Endothelial cell of umbilical vein (primary cell): ENCODE measurements at regions of chr1 and their contacts with region 1.

Region 1: GRCh38 chr1:209747580-209748262 is 8.1 kb upstream of the TRAF3IP3 start:
- DNase-seq: peak; percentile 93
- H3K4me3 ChIP-seq: no peak overlapping the region
- H3K27ac ChIP-seq: no peak overlapping the region
- H3K4me1 ChIP-seq: no peaks in the 10 kb centered on the region
- H3K27me3 ChIP-seq: peaks cover 0 to 5% of the 10 kb centered on the region in 2 experiments
- CTCF ChIP-seq: peak; percentile 80 to 97
- POLR2A ChIP-seq: no peak

Region 2: DNA sequence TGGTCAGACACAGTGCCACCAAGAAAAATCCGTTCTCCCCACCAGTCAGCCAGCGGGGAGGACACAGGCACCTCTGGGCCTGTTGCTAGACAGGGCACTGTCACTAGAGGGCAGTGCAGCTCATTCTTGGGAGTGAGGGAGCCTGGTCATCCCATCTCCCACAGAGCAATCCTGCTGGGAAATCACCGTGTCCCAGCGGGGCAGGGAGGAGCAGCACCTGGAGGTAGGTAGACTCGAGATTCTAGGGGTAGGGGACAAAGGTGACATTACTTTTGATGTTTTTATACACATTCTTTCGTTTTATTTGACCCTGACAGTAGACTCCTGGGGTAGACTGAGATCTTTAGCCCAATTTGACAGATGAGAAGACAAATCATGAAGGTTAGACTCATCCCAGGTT is 170.9 kb before region 1 on chr1:
- CTCF ChIA-PET with region 1: interaction called, 23 read pairs
- POLR2A ChIA-PET with region 1: no interaction called
- dilution Hi-C with region 1: no loop called
- intact Hi-C with region 1: loop called (anchors 1 kb)
- DNase-seq: peak; percentile 72
- H3K4me3 ChIP-seq: no peak overlapping the region
- H3K27ac ChIP-seq: no peak overlapping the region
- H3K4me1 ChIP-seq: peaks cover 8% of the 10 kb centered on the region
- H3K27me3 ChIP-seq: peaks cover 13 to 17% of the 10 kb centered on the region in 2 experiments
- CTCF ChIP-seq: peak; percentile 94 to 95
- POLR2A ChIP-seq: no peak

Region 3: DNA sequence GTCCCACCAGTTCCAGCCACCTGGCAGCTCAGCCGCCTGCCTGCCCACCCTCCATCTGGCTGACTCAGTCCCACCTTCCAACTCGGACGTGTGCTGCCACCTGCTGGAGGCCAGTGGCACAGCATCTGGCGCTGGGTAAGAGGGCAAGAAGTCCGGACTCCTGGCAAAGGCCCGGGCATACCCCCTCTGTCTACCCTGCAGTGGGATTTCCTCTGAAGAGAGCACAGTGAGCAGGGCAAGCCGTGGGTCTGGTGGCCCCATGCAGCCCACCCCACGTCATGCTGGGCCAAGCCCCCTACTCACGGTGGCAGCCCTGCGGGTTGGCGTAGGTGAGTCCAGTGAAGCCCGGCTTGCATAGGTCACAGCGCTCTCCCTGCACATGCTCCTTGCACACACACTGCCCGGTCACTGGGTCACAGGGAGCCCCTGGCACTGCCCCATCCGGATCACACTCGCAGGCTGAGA is 120.0 kb before region 1 on chr1:
- CTCF ChIA-PET with region 1: interaction called, 5 read pairs
- POLR2A ChIA-PET with region 1: no interaction called
- dilution Hi-C with region 1: no loop called
- intact Hi-C with region 1: loop called (anchors 1 kb)
- DNase-seq: peak; percentile 78
- H3K4me3 ChIP-seq: no peak overlapping the region
- H3K27ac ChIP-seq: no peak overlapping the region
- H3K4me1 ChIP-seq: no peaks in the 10 kb centered on the region
- H3K27me3 ChIP-seq: no peaks in the 10 kb centered on the region
- CTCF ChIP-seq: peak; percentile 95 to 99
- POLR2A ChIP-seq: no peak

Region 4: GRCh38 chr1:209692745-209693504 is 54.8 kb before region 1 on chr1:
- CTCF ChIA-PET with region 1: interaction called, 5 read pairs
- POLR2A ChIA-PET with region 1: no interaction called
- dilution Hi-C with region 1: no loop called
- intact Hi-C with region 1: loop called (anchors 1 kb)
- DNase-seq: peak; percentile 79
- H3K4me3 ChIP-seq: no peak overlapping the region
- H3K27ac ChIP-seq: no peak overlapping the region
- H3K4me1 ChIP-seq: no peaks in the 10 kb centered on the region
- H3K27me3 ChIP-seq: peaks cover 9 to 13% of the 10 kb centered on the region in 2 experiments
- CTCF ChIP-seq: peak; percentile 66 to 80
- POLR2A ChIP-seq: no peak

Region 5: GRCh38 chr1:209769171-209769904 is 21.6 kb after region 1 on chr1:
- CTCF ChIA-PET with region 1: interaction called, 24 read pairs
- POLR2A ChIA-PET with region 1: no interaction called
- dilution Hi-C with region 1: no loop called
- intact Hi-C with region 1: loop called (anchors 1 kb)
- DNase-seq: peak; percentile 94
- H3K4me3 ChIP-seq: no peak overlapping the region
- H3K27ac ChIP-seq: peak overlapping the region; percentile 80
- H3K4me1 ChIP-seq: peaks cover 18% of the 10 kb centered on the region
- H3K27me3 ChIP-seq: no peaks in the 10 kb centered on the region
- CTCF ChIP-seq: no peak
- POLR2A ChIP-seq: no peak

Region 6: GRCh38 chr1:209989525-209989924 is 241.8 kb after region 1 on chr1:
- CTCF ChIA-PET with region 1: no interaction called
- POLR2A ChIA-PET with region 1: no interaction called
- dilution Hi-C with region 1: no loop called
- intact Hi-C with region 1: loop called (anchors 5 kb)
- DNase-seq: peak; percentile 31
- H3K4me3 ChIP-seq: no peak overlapping the region
- H3K27ac ChIP-seq: no peak overlapping the region
- H3K4me1 ChIP-seq: no peaks in the 10 kb centered on the region
- H3K27me3 ChIP-seq: peaks cover 3 to 14% of the 10 kb centered on the region in 2 experiments
- CTCF ChIP-seq: no peak
- POLR2A ChIP-seq: no peak